H1 (cell line): ENCODE measurements at regions of chr12 and their contacts with region 1.

Region 1: DNA sequence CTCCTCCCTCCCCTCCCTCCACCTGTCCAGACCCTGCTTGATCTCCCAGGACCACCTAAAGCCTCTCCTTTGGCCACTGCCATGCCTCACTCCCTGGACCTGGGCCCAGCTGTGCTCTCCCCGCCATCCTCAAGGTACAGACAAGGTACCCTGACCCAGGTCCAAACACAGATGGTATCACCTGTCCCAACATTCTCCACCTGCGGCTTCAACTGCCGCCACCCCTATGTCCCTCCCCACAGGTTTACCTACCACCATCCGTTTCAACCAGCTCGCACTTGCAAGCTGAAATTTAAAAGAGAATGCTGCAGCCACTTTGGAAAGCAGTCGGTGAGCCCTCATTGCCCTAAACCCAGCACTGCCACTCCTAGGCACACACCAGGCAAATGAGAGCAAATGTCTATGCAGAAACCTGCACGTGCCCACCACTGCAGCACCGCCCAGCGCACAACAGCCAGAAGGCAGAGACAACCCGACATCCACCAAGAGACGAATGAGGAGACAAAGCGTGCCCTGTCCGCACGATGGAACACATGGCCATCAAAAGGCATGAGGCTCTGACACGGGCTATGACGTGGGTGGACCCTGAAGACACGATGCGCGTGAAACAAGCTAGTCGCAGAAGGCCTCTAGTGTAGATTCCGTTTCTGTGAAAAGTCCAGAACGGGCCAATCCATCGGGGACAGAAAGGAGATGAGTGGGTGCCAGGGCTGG is 71.0 kb downstream of the RFLNA start:
- DNase-seq: no peak
- H3K4me3 ChIP-seq: no peak overlapping the region
- H3K27ac ChIP-seq: no peak overlapping the region
- H3K4me1 ChIP-seq: no peaks in the 10 kb centered on the region
- H3K27me3 ChIP-seq: no peaks in the 10 kb centered on the region
- CTCF ChIP-seq: no peak
- EP300 ChIP-seq: no peak
- POLR2A ChIP-seq: no peak
- RAD21 ChIP-seq: no peak

Region 2: DNA sequence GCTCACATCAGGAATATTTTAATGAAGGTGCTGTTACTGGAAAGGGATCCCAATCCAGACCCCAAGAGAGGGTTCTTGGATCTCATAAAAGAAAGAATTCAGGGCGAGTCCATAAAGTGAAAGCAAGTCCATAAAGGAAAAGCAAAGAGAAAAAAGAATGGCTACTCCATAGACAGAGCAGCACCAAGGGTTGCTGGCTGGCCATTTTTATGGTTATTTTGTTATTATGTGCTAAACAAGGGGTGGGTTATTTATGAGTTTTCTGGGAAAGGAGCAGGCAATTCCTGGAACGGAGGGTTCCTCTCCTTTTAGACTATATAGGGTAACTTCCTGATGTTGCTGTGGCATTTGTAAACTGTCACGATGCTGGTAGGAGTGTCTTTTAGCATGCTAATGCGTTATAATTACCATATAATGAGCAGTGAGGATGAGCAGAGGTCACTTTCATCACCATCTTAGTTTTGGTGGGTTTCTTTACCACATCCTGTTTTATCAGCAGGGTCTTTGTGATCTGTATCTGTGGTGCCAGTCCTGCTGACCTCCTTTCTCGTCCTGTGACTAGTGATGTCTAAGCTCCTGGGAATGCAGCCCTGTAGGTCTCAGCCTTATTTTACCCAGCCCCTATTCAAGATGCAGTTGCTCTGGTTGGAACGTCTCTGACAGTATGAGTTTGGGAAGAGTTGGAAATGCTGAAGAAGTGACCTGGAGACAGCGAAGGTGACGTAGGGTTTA is 292.4 kb before region 1 on chr12:
- CTCF ChIA-PET with region 1: no interaction called
- POLR2A ChIA-PET with region 1: no interaction called
- DNase-seq: no peak
- H3K4me3 ChIP-seq: no peak overlapping the region
- H3K27ac ChIP-seq: no peak overlapping the region
- H3K4me1 ChIP-seq: peaks cover 0 to 11% (median 9%) of the 10 kb centered on the region in 4 experiments; a peak in 5 of 7 replicates
- H3K27me3 ChIP-seq: no peaks in the 10 kb centered on the region
- CTCF ChIP-seq: no peak
- EP300 ChIP-seq: no peak
- POLR2A ChIP-seq: no peak
- RAD21 ChIP-seq: no peak

Region 3: DNA sequence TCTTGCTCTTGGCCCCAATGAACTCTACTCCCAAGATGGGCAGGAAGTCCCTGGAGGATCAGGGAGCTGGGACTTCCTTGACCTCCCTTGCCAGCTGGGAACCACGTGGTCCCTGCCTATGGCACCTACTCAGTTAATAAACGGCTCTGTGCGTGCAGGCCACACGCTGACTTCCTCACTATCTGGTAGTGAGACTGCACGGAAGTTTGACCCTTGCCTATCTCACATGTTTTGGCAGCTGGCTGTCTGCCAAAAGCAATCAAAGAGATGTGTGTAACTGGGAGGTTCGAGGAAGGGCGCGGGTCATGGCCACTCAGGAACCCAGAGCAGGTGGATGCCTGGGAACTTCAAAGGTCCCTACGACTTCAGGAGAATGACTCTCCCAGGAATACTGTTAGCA is 13.0 kb before region 1 on chr12:
- CTCF ChIA-PET with region 1: interaction called, 11 read pairs
- POLR2A ChIA-PET with region 1: interaction called, 5 read pairs
- DNase-seq: no peak
- H3K4me3 ChIP-seq: no peak overlapping the region
- H3K27ac ChIP-seq: no peak overlapping the region
- H3K4me1 ChIP-seq: no peaks in the 10 kb centered on the region
- H3K27me3 ChIP-seq: no peaks in the 10 kb centered on the region
- CTCF ChIP-seq: no peak
- EP300 ChIP-seq: no peak
- POLR2A ChIP-seq: no peak
- RAD21 ChIP-seq: no peak

Region 4: GRCh38 chr12:124636138-124636978 is 270.5 kb after region 1 on chr12:
- CTCF ChIA-PET with region 1: no interaction called
- POLR2A ChIA-PET with region 1: no interaction called
- DNase-seq: no peak
- H3K4me3 ChIP-seq: no peak overlapping the region
- H3K27ac ChIP-seq: no peak overlapping the region
- H3K4me1 ChIP-seq: peaks cover 4 to 13% (median 7%) of the 10 kb centered on the region in 4 experiments
- H3K27me3 ChIP-seq: no peaks in the 10 kb centered on the region
- CTCF ChIP-seq: no peak
- EP300 ChIP-seq: no peak
- POLR2A ChIP-seq: no peak
- RAD21 ChIP-seq: no peak